CD14-positive monocyte (primary cell): ENCODE measurements at regions of chr5 and their contacts with region 1.

Region 1: DNA sequence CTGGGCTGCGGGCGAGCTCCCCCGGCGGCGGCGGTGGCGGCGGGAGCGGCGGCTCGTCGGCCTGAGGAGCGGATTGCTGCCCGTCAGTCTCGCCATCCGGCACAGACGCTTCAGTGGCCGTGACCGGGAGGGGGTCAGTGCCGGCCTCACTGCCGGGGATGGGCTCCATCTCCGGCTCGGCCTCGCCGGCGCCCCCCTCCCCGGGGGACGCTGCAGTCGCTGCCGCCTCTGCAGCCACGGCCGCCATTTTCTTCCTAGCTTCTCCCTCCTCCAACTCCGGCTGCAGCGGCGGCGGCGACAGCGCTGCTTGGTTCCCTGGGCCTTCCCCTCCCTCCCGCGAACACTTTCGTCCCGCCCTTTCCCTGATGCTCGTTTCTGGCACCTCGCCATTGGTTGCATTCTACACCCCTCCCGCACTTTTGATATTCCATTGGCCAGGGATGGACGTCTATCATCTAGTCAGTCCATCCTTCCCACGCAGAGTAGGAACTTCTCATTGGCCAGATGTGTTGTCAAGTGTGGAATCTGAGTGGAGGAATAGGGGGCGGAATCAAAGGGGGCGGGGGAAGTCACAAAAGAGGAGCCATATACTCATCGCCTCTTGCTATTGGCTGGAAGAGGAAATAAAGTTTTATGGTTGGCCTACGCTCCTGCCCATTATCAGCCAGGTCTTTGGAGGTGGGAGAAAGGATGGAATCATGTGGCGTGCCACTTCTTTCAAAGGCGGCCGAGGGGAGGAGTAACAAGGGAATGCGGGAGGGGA is at the start of gene PWWP2A:
- DNase-seq: peak; percentile 100
- H3K4me3 ChIP-seq: peak within 1 kb of the TSS; percentile 62 to 97 (median 82)
- H3K4me3 Mint-ChIP-seq: peak within 1 kb of the TSS; percentile 88 to 94
- H3K27ac ChIP-seq: peak within 1 kb of the TSS; percentile 68 to 86
- H3K27ac Mint-ChIP-seq: peak within 1 kb of the TSS; percentile 80 to 96 (median 93)
- H3K4me1 ChIP-seq: peaks cover 8 to 17% of the 10 kb centered on the region in 2 donors
- H3K4me1 Mint-ChIP-seq: peaks cover 13% of the 10 kb centered on the region
- H3K27me3 ChIP-seq: peaks cover 0 to 3% of the 10 kb centered on the region in 2 donors
- H3K27me3 Mint-ChIP-seq: peaks cover 4 to 8% (median 7%) of the 10 kb centered on the region in 3 donors
- CTCF ChIP-seq: no peak
- polyA plus RNA-seq, gene PWWP2A: 18.8 to 21.6 (median 18.9) TPM

Region 2: DNA sequence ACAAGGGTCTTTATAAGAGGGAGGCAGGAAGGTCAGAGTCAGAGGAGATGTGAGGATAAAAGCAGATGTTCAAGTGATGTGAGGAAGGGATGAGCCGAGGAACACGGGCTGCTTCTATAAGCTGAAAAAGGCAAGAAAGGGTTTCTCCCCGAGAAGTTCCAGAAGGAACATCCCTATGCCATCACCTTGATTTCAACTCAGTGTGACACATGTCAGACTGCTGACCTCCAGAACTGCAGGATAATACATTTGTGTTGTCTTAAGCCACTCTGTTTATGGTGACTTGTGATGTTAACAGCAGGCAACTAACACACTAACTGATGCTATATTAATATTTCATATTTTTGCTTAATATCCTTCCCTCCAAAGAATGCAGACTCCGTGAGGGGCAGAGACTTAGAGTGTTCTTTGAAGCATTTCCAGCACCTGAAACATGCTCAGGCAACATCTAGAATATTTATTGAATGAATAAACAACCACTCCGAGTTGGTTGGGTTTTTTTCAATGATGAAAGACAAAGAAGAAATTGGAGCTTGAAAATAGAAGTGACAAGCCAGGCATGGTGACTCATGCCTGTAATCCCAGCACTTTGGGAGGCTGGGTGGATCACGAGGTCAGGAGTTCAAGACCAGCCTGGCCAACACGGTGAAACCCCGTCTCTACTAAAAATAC is 280.6 kb before region 1 on chr5:
- intact Hi-C with region 1: no loop called
- DNase-seq: no peak
- H3K4me3 ChIP-seq: no peak overlapping the region
- H3K4me3 Mint-ChIP-seq: no peak overlapping the region
- H3K27ac ChIP-seq: no peak overlapping the region
- H3K27ac Mint-ChIP-seq: no peak overlapping the region
- H3K4me1 ChIP-seq: no peaks in the 10 kb centered on the region
- H3K4me1 Mint-ChIP-seq: no peaks in the 10 kb centered on the region
- H3K27me3 ChIP-seq: no peaks in the 10 kb centered on the region
- H3K27me3 Mint-ChIP-seq: peaks cover 1 to 3% (median 2%) of the 10 kb centered on the region in 3 donors
- CTCF ChIP-seq: no peak

Region 3: DNA sequence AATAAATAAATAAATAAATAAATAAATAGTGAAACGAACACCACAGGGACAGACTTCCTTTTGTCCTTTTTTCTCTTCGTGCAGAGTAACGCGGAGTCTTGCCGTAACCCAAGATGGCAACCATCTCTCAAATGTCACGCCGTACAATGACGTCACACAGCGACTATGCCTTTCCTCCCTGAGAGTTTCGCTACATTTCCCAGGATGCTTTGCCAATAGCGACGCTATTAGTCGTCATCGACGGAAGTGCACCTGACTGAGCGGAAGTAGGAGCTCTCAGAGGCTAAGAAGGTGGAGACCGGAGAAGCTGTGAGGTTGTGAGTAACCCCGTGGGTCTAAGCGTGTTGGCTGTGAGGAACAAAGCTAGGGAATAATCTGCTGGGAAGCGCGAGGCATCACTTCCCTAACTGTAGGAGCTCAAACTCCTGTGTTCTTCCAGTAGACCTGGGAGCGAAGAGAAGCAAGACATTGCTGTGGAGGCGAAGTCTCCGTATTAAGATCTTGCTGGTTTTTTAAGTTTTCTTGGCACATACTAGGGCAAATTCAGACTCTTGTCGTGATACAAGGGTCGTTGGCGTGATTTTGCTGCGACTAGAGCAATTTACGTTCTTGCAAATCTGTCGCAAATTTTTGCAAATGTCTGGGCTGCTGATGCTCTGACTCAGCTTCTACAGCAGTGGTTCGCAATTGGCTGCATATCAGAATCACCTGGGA is 110.3 kb before region 1 on chr5 and contains the start of gene TTC1:
- intact Hi-C with region 1: loop called (anchors 5 to 10 kb)
- DNase-seq: peak; percentile 99 to 100 (median 99)
- H3K4me3 ChIP-seq: peak within 1 kb of the TSS; percentile 92 to 100 (median 95)
- H3K4me3 Mint-ChIP-seq: peak within 1 kb of the TSS; percentile 95 to 98
- H3K27ac ChIP-seq: peak within 1 kb of the TSS; percentile 65 to 99
- H3K27ac Mint-ChIP-seq: peak within 1 kb of the TSS; percentile 99 to 100 (median 99)
- H3K4me1 ChIP-seq: peaks cover 15 to 19% of the 10 kb centered on the region in 2 donors
- H3K4me1 Mint-ChIP-seq: peaks cover 19% of the 10 kb centered on the region
- H3K27me3 ChIP-seq: no peaks in the 10 kb centered on the region
- H3K27me3 Mint-ChIP-seq: peaks cover 0 to 14% (median 7%) of the 10 kb centered on the region in 3 donors
- CTCF ChIP-seq: no peak
- polyA plus RNA-seq, gene TTC1: 11.4 to 63.4 (median 63.0) TPM

Region 4: DNA sequence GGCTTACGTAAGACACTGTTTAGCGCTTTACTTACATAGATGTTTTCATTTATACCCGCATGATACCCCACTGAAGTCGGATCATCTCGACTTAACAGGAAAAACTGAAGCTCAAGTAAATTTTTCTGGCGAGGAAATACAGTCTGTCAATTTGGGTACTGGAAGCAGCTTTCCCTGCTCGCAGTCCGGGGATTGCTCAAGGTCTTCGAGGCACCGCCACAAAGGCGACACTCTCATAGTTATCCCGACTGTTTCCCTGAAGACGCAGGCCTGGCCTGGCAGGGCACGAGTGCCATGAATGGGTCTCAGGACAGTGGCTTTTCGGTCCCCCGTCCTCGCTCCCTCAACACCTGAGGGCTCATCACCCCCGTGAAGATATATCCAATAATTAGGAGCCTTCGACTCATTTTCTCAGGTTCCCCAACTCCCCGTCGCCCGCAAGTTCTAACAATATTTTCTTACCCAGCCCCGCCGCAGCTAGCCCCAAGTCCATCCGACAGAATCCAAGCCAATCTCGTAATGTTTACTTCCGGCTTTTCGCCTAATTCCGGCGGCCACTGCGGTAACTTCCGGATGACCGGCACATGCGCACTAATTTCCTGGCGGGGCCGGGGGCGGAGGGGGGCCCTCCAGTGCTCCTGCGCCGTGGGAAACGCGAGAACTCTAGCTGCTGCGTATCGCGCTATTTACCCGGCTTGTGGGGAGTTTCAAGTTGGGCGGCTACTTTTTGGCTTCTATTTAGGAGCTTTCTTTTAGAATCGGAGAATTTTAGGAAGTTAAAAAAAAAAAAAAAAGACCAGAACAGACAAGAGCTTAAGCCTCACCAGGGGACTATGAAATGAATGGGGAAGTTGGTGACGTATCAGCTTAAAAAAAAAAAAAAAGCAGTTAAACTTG is 299.5 kb after region 1 on chr5 and contains the start of gene SLU7:
- intact Hi-C with region 1: loop called in 1 of 2 experiments (anchors 5 kb)
- DNase-seq: peak; percentile 90 to 96 (median 95)
- H3K4me3 ChIP-seq: peak within 1 kb of the TSS; percentile 62 to 98 (median 96)
- H3K4me3 Mint-ChIP-seq: peak within 1 kb of the TSS; percentile 95 to 99
- H3K27ac ChIP-seq: peak within 1 kb of the TSS; percentile 88 to 98
- H3K27ac Mint-ChIP-seq: peak within 1 kb of the TSS; percentile 94 to 100 (median 99)
- H3K4me1 ChIP-seq: peaks cover 33 to 57% of the 10 kb centered on the region in 2 donors
- H3K4me1 Mint-ChIP-seq: peaks cover 50% of the 10 kb centered on the region
- H3K27me3 ChIP-seq: no peaks in the 10 kb centered on the region
- H3K27me3 Mint-ChIP-seq: no peaks in the 10 kb centered on the region
- CTCF ChIP-seq: no peak
- polyA plus RNA-seq, gene SLU7: 38.4 to 61.6 (median 42.3) TPM

Region 5: GRCh38 chr5:161138751-161139455 is 1019.6 kb after region 1 on chr5:
- intact Hi-C with region 1: no loop called
- DNase-seq: no peak
- H3K4me3 ChIP-seq: no peak overlapping the region
- H3K4me3 Mint-ChIP-seq: no peak overlapping the region
- H3K27ac ChIP-seq: no peak overlapping the region
- H3K27ac Mint-ChIP-seq: no peak overlapping the region
- H3K4me1 ChIP-seq: no peaks in the 10 kb centered on the region
- H3K4me1 Mint-ChIP-seq: no peaks in the 10 kb centered on the region
- H3K27me3 ChIP-seq: no peaks in the 10 kb centered on the region
- H3K27me3 Mint-ChIP-seq: peaks cover 0 to 1% (median 0%) of the 10 kb centered on the region in 3 donors
- CTCF ChIP-seq: no peak